HEK293 (cell line): ENCODE measurements at regions of chr7 and their contacts with region 1.

Region 1: GRCh38 chr7:873367-874002 is 2.9 kb upstream of the GET4 start:
- H3K4me3 ChIP-seq: no peak overlapping the region
- H3K27ac ChIP-seq: no peak overlapping the region
- H3K4me1 ChIP-seq: no peaks in the 10 kb centered on the region
- CTCF ChIP-seq: peak; percentile 75

Region 2: GRCh38 chr7:322111-322671 is 551.3 kb before region 1 on chr7:
- CTCF ChIA-PET with region 1: interaction called, 10 read pairs
- POLR2A ChIA-PET with region 1: no interaction called
- H3K4me3 ChIP-seq: no peak overlapping the region
- H3K27ac ChIP-seq: no peak overlapping the region
- H3K4me1 ChIP-seq: peaks cover 5% of the 10 kb centered on the region; the same call in 1 of the 2 replicates
- CTCF ChIP-seq: peak; percentile 71; the same call in 1 of the 2 replicates

Region 3: GRCh38 chr7:786472-787255 is 86.8 kb before region 1 on chr7:
- CTCF ChIA-PET with region 1: interaction called, 24 read pairs
- POLR2A ChIA-PET with region 1: no interaction called
- H3K4me3 ChIP-seq: no peak overlapping the region
- H3K27ac ChIP-seq: no peak overlapping the region
- H3K4me1 ChIP-seq: no peaks in the 10 kb centered on the region
- CTCF ChIP-seq: no peak

Region 4: DNA sequence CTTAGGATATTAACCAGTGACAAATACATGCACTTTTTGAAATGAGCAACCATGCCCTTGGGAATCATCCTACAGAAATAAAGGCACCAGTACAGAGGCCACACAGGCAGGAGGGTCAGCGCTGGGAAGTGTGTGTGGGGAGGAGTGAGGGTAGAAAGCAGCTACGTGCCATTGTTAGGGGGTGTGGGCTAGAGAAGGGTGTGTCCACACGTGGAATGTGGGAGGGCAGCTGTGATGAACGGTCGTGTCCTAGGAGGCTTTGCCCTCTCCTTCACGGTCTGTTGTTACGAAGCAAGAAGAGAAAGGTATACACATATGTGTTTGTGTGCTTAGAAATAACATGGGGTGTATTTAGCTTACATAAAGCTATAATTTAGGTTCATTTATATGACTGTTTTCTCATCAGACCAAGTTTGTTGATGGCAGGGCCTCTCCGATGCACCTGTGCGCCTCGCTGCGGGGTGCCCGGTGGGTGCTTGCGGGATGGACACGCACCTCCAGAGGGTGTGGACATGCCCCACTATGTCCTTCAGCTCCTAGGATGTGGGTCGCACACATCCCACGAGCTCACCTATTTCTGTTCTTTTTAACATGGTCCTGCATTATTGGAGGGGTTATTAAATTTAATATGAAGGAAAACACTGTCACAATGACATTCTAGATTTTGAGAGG is 14.0 kb before region 1 on chr7:
- CTCF ChIA-PET with region 1: interaction called, 16 read pairs
- POLR2A ChIA-PET with region 1: no interaction called
- H3K4me3 ChIP-seq: no peak overlapping the region
- H3K27ac ChIP-seq: no peak overlapping the region
- H3K4me1 ChIP-seq: no peaks in the 10 kb centered on the region
- CTCF ChIP-seq: no peak